Calu3 (cell line): ENCODE measurements at regions of chr5 and their contacts with region 1.

Region 1: DNA sequence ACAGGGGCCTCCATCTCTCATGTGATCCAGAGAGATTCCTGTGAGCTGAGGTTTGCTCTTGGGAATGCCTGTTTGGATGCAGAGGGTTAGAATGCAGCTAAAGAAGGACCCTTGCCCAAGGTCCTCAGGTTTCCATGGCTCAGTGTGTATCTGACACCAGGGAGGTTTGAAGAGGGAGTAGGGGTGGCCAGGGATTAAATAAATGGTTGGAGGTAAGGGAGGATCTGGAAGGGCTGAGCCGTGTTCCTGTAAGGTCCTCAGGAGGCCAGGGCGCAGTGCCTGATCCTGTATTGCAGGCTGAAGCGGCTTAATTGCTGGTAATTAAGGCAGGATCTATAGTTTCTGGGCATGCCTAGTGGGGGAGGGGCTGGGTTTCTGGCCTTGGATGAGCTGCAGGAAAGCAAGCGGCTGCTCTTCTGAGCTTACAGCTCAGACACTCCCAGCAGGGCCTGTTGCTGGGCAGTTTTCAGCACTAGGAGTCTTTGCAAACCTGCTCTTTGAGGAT is 41.5 kb upstream of the MAP1B start:
- DNase-seq: no peak
- H3K4me3 Mint-ChIP-seq: no peak overlapping the region
- H3K27ac Mint-ChIP-seq: no peak overlapping the region
- H3K4me1 Mint-ChIP-seq: peaks cover 39% of the 10 kb centered on the region
- H3K27me3 Mint-ChIP-seq: no peaks in the 10 kb centered on the region
- CTCF ChIP-seq: no peak

Region 2: DNA sequence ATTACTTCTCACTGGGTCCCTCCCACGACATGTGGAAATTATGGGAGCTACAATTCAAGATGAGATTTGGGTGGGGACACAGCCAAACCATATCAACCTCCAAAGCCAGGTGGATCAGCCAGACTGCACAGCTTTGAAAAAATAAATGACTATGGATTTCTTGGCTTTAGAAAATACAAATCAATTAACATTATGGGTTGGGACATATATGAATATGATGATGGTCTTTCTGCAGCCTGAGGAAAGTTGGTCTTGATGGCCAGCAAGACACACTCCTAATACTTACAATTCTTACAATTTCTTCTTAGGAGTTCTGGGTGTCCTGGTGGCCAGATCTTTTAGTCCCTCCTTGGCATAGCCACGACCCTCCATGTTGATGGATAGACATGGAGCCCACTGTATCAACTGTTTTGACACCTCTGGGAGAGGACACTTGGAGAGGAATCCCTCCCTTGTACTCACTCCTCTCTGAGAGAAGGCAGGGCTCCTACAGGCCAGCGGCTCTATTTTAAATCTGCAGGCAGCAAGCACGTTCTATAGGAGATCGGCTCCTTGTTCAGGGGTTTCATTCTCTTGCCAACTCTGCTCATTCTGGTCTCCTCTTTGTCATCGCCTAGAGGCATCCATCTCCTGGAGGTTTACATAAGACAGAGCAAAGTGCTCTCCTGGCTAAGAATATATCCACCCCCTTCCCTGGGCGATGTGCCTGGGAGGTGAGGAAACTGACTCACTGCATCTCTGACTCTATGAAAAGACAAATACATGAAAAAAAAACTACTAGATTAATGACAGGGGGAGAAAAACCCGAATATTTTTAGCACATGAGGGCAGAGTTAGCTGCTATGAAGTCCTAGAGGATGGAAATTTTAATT is 200.8 kb before region 1 on chr5:
- CTCF ChIA-PET with region 1: no interaction called
- intact Hi-C with region 1: no loop called
- DNase-seq: no peak
- H3K4me3 Mint-ChIP-seq: no peak overlapping the region
- H3K27ac Mint-ChIP-seq: no peak overlapping the region
- H3K4me1 Mint-ChIP-seq: no peaks in the 10 kb centered on the region
- H3K27me3 Mint-ChIP-seq: peaks cover 25% of the 10 kb centered on the region
- CTCF ChIP-seq: no peak

Region 3: DNA sequence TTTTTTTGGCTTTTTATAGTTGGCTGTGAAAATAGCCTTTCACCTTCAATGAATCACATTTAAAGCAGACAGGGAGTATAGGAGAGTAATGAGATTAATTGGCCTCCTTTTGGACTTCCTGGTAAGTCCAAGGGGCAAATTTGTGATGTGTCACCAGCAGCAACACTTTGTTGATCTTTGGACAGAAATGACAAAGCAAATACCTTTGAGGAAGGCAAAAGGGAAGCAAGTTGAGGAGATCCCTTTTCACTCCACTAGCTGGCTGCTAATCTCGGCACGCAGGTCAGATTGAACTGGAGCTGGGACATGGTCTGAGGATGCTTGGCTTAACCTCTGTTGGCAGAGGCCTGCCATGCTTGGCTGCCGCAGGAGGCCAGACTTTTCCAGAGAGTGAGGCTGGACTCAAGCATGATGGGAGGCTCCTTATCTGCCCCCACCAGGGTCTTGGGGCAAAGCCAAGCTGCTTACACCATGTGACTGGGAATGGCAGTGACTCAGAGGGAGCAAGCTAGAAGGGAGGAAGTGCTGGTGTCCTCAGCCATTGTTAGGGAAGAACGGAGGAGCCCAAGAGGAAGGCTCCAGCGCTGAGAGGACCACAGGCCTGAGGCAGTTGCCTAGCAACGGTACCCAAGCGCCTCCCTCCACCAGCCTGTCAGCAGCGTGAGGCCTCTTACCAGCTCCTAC is 133.0 kb before region 1 on chr5:
- CTCF ChIA-PET with region 1: no interaction called
- intact Hi-C with region 1: loop called (anchors 5 kb)
- DNase-seq: peak; percentile 83
- H3K4me3 Mint-ChIP-seq: peak overlapping the region; percentile 28
- H3K27ac Mint-ChIP-seq: peak overlapping the region; percentile 93
- H3K4me1 Mint-ChIP-seq: peaks cover 23% of the 10 kb centered on the region
- H3K27me3 Mint-ChIP-seq: no peaks in the 10 kb centered on the region
- CTCF ChIP-seq: no peak

Region 4: DNA sequence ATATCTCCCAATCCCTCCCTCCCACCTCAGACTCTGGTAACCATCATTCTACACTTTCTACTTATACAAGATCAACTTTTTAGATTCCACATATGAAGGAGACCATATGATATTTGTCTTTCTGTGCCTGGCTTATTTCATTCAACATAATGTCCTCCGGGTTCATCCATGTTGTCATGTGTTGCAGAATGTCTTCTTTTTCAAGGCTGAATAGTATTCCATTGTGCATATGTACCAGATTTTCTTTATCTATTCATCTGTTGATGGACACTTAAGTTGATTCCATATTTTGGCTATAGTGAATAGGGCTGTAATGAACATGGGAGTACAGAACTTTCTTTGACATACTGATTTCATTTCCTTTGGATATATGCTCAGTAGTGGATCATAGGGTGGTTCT is 37.4 kb before region 1 on chr5:
- CTCF ChIA-PET with region 1: no interaction called
- intact Hi-C with region 1: loop called (anchors 5 kb)
- DNase-seq: no peak
- H3K4me3 Mint-ChIP-seq: no peak overlapping the region
- H3K27ac Mint-ChIP-seq: no peak overlapping the region
- H3K4me1 Mint-ChIP-seq: no peaks in the 10 kb centered on the region
- H3K27me3 Mint-ChIP-seq: no peaks in the 10 kb centered on the region
- CTCF ChIP-seq: no peak

Region 5: GRCh38 chr5:72055636-72056035 is 10.2 kb before region 1 on chr5:
- CTCF ChIA-PET with region 1: no interaction called
- intact Hi-C with region 1: no loop called
- DNase-seq: no peak
- H3K4me3 Mint-ChIP-seq: no peak overlapping the region
- H3K27ac Mint-ChIP-seq: no peak overlapping the region
- H3K4me1 Mint-ChIP-seq: no peaks in the 10 kb centered on the region
- H3K27me3 Mint-ChIP-seq: peaks cover 39% of the 10 kb centered on the region
- CTCF ChIP-seq: no peak